ENCODE measurements at regions of chr19 and their contacts with region 1.

Region 1: GRCh38 chr19:45164577-45165335 is 4.0 kb upstream of the NKPD1 start:
- DNase-seq: peak in 1 of 2 experiments; percentile 79
- ATAC-seq: peak; percentile 20 to 68
- H3K4me3 ChIP-seq: no peak overlapping the region
- H3K27ac ChIP-seq: peak overlapping the region in 1 of 2 experiments; percentile 13; a peak in 2 of 6 replicates
- H3K4me1 ChIP-seq: 0 out of 3 replicates have a peak, but pooled peaks cover 4% of the 10 kb centered on the region
- CTCF ChIP-seq: no peak
- EP300 ChIP-seq: no peak
- POLR2A ChIP-seq: no peak
- RAD21 ChIP-seq: no peak

Region 2: GRCh38 chr19:45178262-45179071 is 13.7 kb after region 1 on chr19 and contains the start of gene BLOC1S3:
- CTCF ChIA-PET with region 1: interaction called, 18 read pairs
- POLR2A ChIA-PET with region 1: interaction called, 11 read pairs
- DNase-seq: peak; percentile 100
- ATAC-seq: peak; percentile 87 to 94
- H3K4me3 ChIP-seq: peak within 1 kb of the TSS; percentile 71
- H3K27ac ChIP-seq: peak within 1 kb of the TSS; percentile 76 to 85
- H3K4me1 ChIP-seq: peaks cover 11% of the 10 kb centered on the region; the same call in 2 of the 3 replicates
- CTCF ChIP-seq: no peak; the same call in 2 of the 3 replicates
- EP300 ChIP-seq: no peak
- POLR2A ChIP-seq: peak; percentile 76
- RAD21 ChIP-seq: peak in 1 of 2 experiments; percentile 6; a peak in 1 of 5 replicates
- polyA plus RNA-seq, gene BLOC1S3: 7.5 and 10.5 TPM in 2 replicates